CD4-positive, alpha-beta memory T cell (primary cell): ENCODE measurements at regions of chr16 and their contacts with region 1.

Region 1: GRCh38 chr16:68093816-68094613 is 8.8 kb downstream of the NFATC3 start:
- DNase-seq: peak in 2 of 5 donors; percentile 40 to 43
- H3K4me3 ChIP-seq: no peak overlapping the region
- H3K4me3 Mint-ChIP-seq: peak overlapping the region in 6 of 8 donors; percentile 29 to 64 (median 50)
- H3K27ac ChIP-seq: no peak overlapping the region
- H3K27ac Mint-ChIP-seq: peak overlapping the region; percentile 50 to 96 (median 84)
- H3K4me1 ChIP-seq: peaks cover 89% of the 10 kb centered on the region
- H3K4me1 Mint-ChIP-seq: peaks cover 60 to 90% (median 74%) of the 10 kb centered on the region in 4 donors
- H3K27me3 ChIP-seq: no peaks in the 10 kb centered on the region
- H3K27me3 Mint-ChIP-seq: no peaks in the 10 kb centered on the region

Region 2: GRCh38 chr16:68074850-68075555 is 19.0 kb before region 1 on chr16:
- CTCF ChIA-PET with region 1: interaction called, 6 read pairs
- POLR2A ChIA-PET with region 1: interaction called, 474 read pairs
- intact Hi-C with region 1: no loop called
- DNase-seq: peak; percentile 63 to 82 (median 71)
- H3K4me3 ChIP-seq: peak overlapping the region in 1 of 2 donors; percentile 1
- H3K4me3 Mint-ChIP-seq: peak overlapping the region; percentile 26 to 89 (median 84)
- H3K27ac ChIP-seq: peak overlapping the region; percentile 40
- H3K27ac Mint-ChIP-seq: peak overlapping the region; percentile 66 to 95 (median 91)
- H3K4me1 ChIP-seq: peaks cover 94% of the 10 kb centered on the region
- H3K4me1 Mint-ChIP-seq: peaks cover 70 to 92% (median 84%) of the 10 kb centered on the region in 4 donors
- H3K27me3 ChIP-seq: no peaks in the 10 kb centered on the region
- H3K27me3 Mint-ChIP-seq: no peaks in the 10 kb centered on the region

Region 3: GRCh38 chr16:68116256-68116867 is 22.3 kb after region 1 on chr16:
- CTCF ChIA-PET with region 1: interaction called, 35 read pairs
- POLR2A ChIA-PET with region 1: no interaction called
- intact Hi-C with region 1: loop called (anchors 2 kb)
- DNase-seq: peak in 4 of 5 donors; percentile 30 to 41 (median 33)
- H3K4me3 ChIP-seq: no peak overlapping the region
- H3K4me3 Mint-ChIP-seq: peak overlapping the region in 4 of 8 donors; percentile 30 to 78 (median 50)
- H3K27ac ChIP-seq: no peak overlapping the region
- H3K27ac Mint-ChIP-seq: peak overlapping the region in 2 of 7 donors; percentile 62
- H3K4me1 ChIP-seq: peaks cover 95% of the 10 kb centered on the region
- H3K4me1 Mint-ChIP-seq: peaks cover 52 to 96% (median 79%) of the 10 kb centered on the region in 4 donors
- H3K27me3 ChIP-seq: no peaks in the 10 kb centered on the region
- H3K27me3 Mint-ChIP-seq: no peaks in the 10 kb centered on the region

Region 4: DNA sequence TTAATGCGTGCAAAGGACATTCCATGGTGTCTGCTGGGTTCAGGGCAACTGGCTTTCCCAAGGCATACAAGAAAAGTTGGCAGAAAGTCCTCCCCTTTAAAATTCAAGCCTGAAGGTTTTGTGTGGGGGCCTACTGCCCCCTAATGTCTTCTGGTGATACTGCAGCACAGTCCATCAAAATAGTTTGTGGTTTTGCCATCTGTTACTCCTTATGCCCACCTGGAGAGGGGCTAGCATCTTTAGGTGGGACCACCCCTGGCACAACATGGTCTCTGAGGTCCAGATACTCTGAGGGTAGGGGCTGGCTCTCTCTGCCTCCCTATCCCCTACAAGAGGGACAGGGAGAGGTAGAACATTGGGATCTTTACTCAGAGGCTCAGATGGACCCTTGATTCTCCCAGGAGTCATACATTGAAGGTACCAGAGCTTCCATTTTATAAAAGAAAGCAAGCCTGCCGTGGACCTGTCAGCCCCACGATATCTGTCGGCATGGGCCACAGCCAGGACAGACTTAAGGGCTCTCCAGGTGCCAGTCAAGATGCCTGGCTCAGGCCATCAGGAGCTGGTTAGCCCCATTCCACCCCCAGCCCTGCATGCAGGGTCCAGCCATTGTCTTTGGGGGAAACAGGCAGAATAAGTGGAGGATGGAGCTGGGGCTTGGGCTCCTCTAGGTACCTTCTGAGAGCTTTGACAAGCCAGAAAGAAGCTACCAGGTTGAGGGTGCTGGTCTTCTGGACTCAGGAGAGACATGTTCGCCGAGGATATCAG is 135.6 kb after region 1 on chr16:
- CTCF ChIA-PET with region 1: interaction called, 19 read pairs
- POLR2A ChIA-PET with region 1: interaction called, 6 read pairs
- intact Hi-C with region 1: loop called (anchors 1 kb)
- DNase-seq: peak in 4 of 5 donors; percentile 44 to 55 (median 52)
- H3K4me3 ChIP-seq: no peak overlapping the region
- H3K4me3 Mint-ChIP-seq: peak overlapping the region in 1 of 8 donors; percentile 31
- H3K27ac ChIP-seq: no peak overlapping the region
- H3K27ac Mint-ChIP-seq: peak overlapping the region in 6 of 7 donors; percentile 10 to 89 (median 51)
- H3K4me1 ChIP-seq: peaks cover 23% of the 10 kb centered on the region
- H3K4me1 Mint-ChIP-seq: peaks cover 21 to 51% (median 34%) of the 10 kb centered on the region in 4 donors
- H3K27me3 ChIP-seq: no peaks in the 10 kb centered on the region
- H3K27me3 Mint-ChIP-seq: no peaks in the 10 kb centered on the region